Breast epithelium (tissue), 4 donors: ENCODE measurements at regions of chr1 and their contacts with region 1.

Region 1: DNA sequence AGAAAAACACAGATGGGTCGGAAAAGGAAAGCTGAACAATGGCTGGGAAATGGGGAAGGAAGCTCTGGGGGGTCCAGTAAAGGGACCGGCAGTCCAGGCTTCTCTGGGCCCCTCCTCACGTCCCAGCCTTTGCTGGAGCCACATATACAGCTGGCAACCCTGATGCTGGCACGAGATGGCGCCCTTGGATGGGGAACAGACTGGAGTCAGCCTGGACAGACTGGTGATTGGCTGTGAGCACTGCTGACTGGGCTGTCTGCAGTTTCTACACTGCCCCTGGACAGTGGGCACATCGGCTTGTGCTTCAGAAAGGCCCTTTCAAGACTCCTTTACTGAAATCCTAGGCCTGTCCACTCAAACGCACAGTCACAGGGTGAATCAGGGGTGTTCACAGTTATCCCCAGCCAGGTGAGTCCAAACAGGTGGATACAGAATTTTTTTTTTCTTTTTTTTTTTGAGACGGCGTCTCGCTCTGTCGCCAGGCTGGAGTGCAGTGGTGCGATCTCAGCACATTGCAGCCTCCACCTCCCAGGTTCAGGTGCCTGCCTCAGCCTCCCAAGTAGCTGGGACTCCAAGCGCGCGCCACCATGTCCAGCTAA is 31.1 kb upstream of the ZBTB40 start:
- DNase-seq: peak; percentile 56 to 82
- H3K4me3 ChIP-seq: no peak overlapping the region
- H3K27ac ChIP-seq: no peak overlapping the region
- H3K4me1 ChIP-seq: no peaks in the 10 kb centered on the region
- H3K27me3 ChIP-seq: peaks cover 0 to 4% of the 10 kb centered on the region in 2 donors
- CTCF ChIP-seq: peak in 2 of 3 donors; percentile 71 to 72
- POLR2A ChIP-seq: no peak

Region 2: DNA sequence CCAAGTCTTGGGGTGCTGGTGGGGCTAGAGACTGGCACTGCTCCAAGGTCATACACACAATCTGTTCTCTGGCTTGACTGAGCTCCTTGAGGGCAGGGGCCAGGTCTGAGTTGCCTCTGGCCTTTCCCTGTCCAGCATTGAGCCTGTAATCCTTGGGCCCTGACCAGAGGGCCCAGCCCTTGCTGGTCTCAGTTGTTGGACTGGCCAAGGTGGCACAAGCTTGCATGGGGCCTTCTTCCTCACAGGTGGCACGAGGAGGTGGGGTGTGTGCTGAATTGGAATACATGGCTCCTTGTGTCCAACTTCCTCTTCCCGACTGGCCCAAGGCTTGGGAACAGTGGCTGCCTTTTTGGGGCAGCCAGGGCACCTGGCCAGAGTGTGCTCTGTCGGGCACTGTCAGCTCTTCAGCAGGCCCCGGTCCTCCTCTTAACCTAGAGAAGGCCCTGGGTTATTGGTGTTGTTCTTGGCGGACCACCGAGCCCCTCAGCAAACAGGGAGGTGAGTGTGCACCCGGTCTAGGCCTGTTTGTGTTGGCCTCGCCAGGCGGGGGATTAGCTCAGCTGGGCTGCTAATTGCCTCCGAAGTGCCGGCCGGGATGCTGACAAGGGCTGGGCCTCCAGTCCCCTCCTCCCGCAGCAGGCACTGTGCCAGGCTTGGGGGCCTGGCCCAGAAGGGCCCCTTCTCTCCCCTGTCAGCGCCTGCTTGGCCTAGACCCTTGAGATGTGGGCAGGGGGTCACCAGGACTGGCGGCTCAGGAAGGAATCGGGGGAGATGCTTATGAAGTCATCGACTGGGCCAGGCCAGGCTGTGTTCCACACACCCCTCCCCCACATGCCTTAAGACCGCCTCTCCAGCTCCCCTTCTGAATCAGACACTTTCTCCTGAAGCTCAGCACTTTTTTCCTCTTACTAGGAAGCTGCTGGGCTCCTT is 306.2 kb before region 1 on chr1:
- intact Hi-C with region 1: loop called (anchors 10 kb)
- DNase-seq: no peak
- H3K4me3 ChIP-seq: no peak overlapping the region
- H3K27ac ChIP-seq: peak overlapping the region; percentile 36 to 40
- H3K4me1 ChIP-seq: peaks cover 6 to 11% of the 10 kb centered on the region in 2 donors
- H3K27me3 ChIP-seq: no peaks in the 10 kb centered on the region
- CTCF ChIP-seq: no peak
- POLR2A ChIP-seq: no peak

Region 3: DNA sequence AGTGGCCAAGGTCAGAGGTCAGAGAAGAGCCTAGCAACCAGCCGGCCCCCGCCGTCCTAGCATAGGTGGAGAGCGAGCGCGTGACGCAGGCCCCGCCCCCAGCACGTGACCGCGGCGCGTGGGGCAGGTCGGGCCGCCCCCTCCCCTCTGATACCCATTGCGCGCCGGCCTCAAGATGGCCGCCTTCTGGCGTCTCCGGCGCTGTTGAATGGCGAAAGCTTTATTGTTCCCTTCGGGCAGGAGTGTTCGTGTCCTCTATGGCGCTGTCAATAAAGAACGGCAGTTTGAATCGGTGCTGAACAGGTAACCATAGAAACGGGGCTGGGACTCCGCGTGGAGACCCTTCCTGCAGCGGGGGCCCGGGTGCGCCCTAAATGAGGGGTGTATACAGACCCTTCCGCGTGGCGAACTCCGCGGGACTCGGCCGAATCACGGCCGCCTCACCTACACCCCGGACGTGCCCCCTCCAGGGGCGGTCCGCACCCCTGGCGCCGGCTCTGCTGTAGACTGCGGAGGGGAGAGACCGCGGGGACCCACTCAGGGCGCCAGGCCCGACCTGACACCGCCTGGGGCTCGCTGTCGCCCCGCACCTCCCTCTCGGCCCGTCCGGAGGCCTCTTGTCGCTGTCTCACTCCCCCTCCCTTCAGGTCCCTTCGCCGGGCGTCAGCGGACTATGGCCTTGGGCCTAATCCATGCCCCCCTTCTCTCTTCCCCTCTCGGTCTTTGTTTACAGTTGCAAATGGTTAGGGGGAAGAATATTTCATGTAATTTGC is 31.3 kb after region 1 on chr1 and contains the start of gene ZBTB40:
- intact Hi-C with region 1: no loop called
- DNase-seq: peak; percentile 95 to 96
- H3K4me3 ChIP-seq: peak within 1 kb of the TSS; percentile 84 to 96 (median 95)
- H3K27ac ChIP-seq: peak within 1 kb of the TSS; percentile 95 to 98
- H3K4me1 ChIP-seq: no peaks in the 10 kb centered on the region
- H3K27me3 ChIP-seq: no peaks in the 10 kb centered on the region
- CTCF ChIP-seq: peak in 1 of 3 donors; percentile 10
- POLR2A ChIP-seq: no peak
- total RNA-seq, gene ZBTB40: 15.7 to 24.6 (median 22.0) TPM

Region 4: GRCh38 chr1:22641906-22642636 is 221.5 kb after region 1 on chr1:
- intact Hi-C with region 1: loop called (anchors 5 kb)
- DNase-seq: peak; percentile 53 to 80
- H3K4me3 ChIP-seq: no peak overlapping the region
- H3K27ac ChIP-seq: no peak overlapping the region
- H3K4me1 ChIP-seq: no peaks in the 10 kb centered on the region
- H3K27me3 ChIP-seq: no peaks in the 10 kb centered on the region
- CTCF ChIP-seq: peak; percentile 54 to 89 (median 86)
- POLR2A ChIP-seq: no peak